ENCODE measurements at regions of chrX and their contacts with region 1.

Region 1: GRCh38 chrX:48957827-48958634 is 624 bp upstream of the OTUD5 start:
- DNase-seq: peak; percentile 84 to 97 (median 95)
- ATAC-seq: peak; percentile 86
- H3K4me3 ChIP-seq: peak overlapping the region; percentile 89
- H3K4me3 Mint-ChIP-seq: peak overlapping the region; percentile 81 to 100 (median 98)
- H3K27ac ChIP-seq: peak overlapping the region; percentile 100
- H3K27ac Mint-ChIP-seq: peak overlapping the region; percentile 98 to 100 (median 100)
- H3K4me1 ChIP-seq: peaks cover 26 to 36% of the 10 kb centered on the region in 2 donors
- H3K4me1 Mint-ChIP-seq: peaks cover 9 to 55% (median 38%) of the 10 kb centered on the region in 7 donors
- H3K27me3 ChIP-seq: no peaks in the 10 kb centered on the region
- H3K27me3 Mint-ChIP-seq: peaks cover 0 to 2% (median 0%) of the 10 kb centered on the region in 5 donors

Region 2: GRCh38 chrX:48179691-48180090 is 778.3 kb before region 1 on chrX:
- CTCF ChIA-PET with region 1: no interaction called
- POLR2A ChIA-PET with region 1: no interaction called
- intact Hi-C with region 1: no loop called
- DNase-seq: no peak
- ATAC-seq: no peak
- H3K4me3 ChIP-seq: no peak overlapping the region
- H3K4me3 Mint-ChIP-seq: no peak overlapping the region
- H3K27ac ChIP-seq: no peak overlapping the region
- H3K27ac Mint-ChIP-seq: no peak overlapping the region
- H3K4me1 ChIP-seq: no peaks in the 10 kb centered on the region
- H3K4me1 Mint-ChIP-seq: no peaks in the 10 kb centered on the region
- H3K27me3 ChIP-seq: no peaks in the 10 kb centered on the region
- H3K27me3 Mint-ChIP-seq: peaks cover 0 to 2% (median 0%) of the 10 kb centered on the region in 5 donors

Region 3: DNA sequence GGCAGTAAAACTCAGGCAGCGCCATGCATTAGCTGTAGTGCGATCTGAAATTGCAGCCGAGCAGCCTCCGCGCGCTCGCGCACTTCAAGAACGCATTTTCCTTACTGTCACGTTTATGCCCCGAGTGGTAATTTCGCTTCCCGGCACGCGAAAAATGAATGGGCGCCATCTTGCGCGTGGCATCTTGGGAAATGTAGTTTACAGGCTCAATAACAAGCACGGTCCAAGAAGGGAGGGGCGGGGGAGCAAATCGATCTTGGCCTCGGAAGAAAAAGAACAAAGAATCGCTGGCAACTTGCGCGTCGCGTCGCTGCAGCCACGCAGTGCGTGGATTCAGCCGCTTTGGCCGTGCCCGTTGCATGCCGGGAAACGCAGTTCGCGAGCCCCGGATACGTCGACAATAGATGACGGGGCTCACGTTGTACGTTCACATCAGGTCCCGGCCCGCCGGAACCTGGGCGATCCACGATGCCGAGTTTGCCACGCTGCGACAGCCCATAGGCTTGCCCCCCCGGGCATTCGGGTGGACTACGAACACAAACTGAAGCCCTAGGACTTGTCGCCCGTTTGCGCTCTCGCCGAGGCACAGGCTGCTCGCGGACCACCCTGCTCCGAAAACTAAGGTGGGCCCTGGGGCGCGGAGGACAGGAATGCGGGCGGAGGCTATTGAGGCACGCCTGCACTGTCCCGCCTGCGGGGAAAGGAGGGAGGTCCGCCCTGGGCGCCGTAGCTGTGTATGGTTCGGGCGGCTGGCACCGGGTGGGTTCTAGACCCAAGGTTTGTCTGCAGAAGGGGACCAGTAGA is 482.1 kb before region 1 on chrX and contains the start of gene FTSJ1:
- CTCF ChIA-PET with region 1: no interaction called
- POLR2A ChIA-PET with region 1: no interaction called
- intact Hi-C with region 1: loop called in 1 of 2 experiments (anchors 5 kb)
- DNase-seq: peak; percentile 59 to 95 (median 91)
- ATAC-seq: peak; percentile 93
- H3K4me3 ChIP-seq: peak within 1 kb of the TSS; percentile 83
- H3K4me3 Mint-ChIP-seq: peak within 1 kb of the TSS; percentile 74 to 93 (median 88)
- H3K27ac ChIP-seq: peak within 1 kb of the TSS; percentile 93
- H3K27ac Mint-ChIP-seq: peak within 1 kb of the TSS; percentile 84 to 96 (median 93)
- H3K4me1 ChIP-seq: peaks cover 8 to 10% of the 10 kb centered on the region in 2 donors
- H3K4me1 Mint-ChIP-seq: peaks cover 19 to 35% (median 26%) of the 10 kb centered on the region in 7 donors
- H3K27me3 ChIP-seq: no peaks in the 10 kb centered on the region
- H3K27me3 Mint-ChIP-seq: no peaks in the 10 kb centered on the region
- total RNA-seq, gene FTSJ1: 48.6 to 62.5 (median 59.5) TPM

Region 4: DNA sequence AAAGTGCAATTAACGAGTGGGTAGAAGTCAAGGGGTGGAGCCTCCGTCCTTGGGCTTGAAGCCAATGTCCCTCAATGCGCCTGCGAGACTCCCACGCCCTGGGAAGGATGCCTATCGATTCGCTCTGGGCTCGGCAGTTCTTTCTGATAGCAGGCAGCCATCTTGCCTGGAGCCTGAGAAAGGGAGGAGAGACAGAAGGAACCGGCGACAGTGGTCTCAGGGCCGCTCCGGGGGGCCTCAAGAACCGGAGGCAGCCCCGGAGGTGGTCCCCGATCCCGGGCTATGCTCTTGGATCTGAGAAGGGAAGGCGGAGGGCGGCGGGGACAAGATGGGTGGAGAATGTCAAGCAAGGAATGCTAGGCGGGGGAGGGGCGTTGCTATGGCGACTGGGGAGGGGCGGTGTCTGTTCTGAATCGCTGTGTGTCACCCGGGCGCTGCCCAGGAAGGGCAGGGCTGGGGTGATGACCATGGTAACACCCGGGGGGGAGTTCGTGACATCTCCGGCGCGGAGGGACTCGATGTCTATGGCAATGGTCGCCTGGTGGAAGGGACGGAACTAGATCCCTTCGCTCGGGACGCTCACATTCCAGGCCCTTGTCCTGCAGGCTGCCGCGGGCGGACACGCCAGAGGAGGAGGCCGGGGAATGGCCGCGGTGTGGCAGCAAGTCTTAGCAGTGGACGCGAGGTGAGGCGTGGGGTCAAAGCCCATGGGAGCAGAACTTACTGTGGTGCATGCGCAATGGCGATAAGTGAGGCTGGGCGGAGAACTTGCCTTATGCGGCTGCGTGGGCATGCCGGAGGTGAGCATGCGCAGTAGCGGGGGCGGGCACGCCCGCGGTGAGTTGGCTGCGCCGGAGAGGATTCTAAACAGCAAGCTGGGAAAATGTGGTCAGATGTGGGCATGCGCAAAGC is 360.4 kb before region 1 on chrX and contains the start of gene WDR13:
- CTCF ChIA-PET with region 1: no interaction called
- POLR2A ChIA-PET with region 1: interaction called, 3 read pairs
- intact Hi-C with region 1: loop called in 1 of 2 experiments (anchors 1 kb)
- DNase-seq: peak; percentile 77 to 93 (median 91)
- ATAC-seq: peak; percentile 93
- H3K4me3 ChIP-seq: peak within 1 kb of the TSS; percentile 98
- H3K4me3 Mint-ChIP-seq: peak within 1 kb of the TSS; percentile 81 to 99 (median 96)
- H3K27ac ChIP-seq: peak within 1 kb of the TSS; percentile 94
- H3K27ac Mint-ChIP-seq: peak within 1 kb of the TSS; percentile 98 to 100 (median 99)
- H3K4me1 ChIP-seq: peaks cover 0 to 8% of the 10 kb centered on the region in 2 donors
- H3K4me1 Mint-ChIP-seq: peaks cover 4 to 16% (median 11%) of the 10 kb centered on the region in 7 donors
- H3K27me3 ChIP-seq: no peaks in the 10 kb centered on the region
- H3K27me3 Mint-ChIP-seq: peaks cover 0 to 2% (median 0%) of the 10 kb centered on the region in 5 donors
- total RNA-seq, gene WDR13: 44.8 to 66.9 (median 54.4) TPM

Region 5: GRCh38 chrX:48801280-48802088 is 156.5 kb before region 1 on chrX and contains the start of gene HDAC6:
- CTCF ChIA-PET with region 1: no interaction called
- POLR2A ChIA-PET with region 1: interaction called, 12 read pairs
- intact Hi-C with region 1: loop called (anchors 1 kb)
- DNase-seq: peak; percentile 76 to 98 (median 95)
- ATAC-seq: peak; percentile 91
- H3K4me3 ChIP-seq: peak within 1 kb of the TSS; percentile 84
- H3K4me3 Mint-ChIP-seq: peak within 1 kb of the TSS; percentile 91 to 98 (median 96)
- H3K27ac ChIP-seq: peak within 1 kb of the TSS; percentile 97
- H3K27ac Mint-ChIP-seq: peak within 1 kb of the TSS; percentile 96 to 99 (median 98)
- H3K4me1 ChIP-seq: peaks cover 6 to 12% of the 10 kb centered on the region in 2 donors
- H3K4me1 Mint-ChIP-seq: peaks cover 10 to 27% (median 16%) of the 10 kb centered on the region in 7 donors
- H3K27me3 ChIP-seq: no peaks in the 10 kb centered on the region
- H3K27me3 Mint-ChIP-seq: no peaks in the 10 kb centered on the region
- total RNA-seq, gene HDAC6: 84.3 to 135 (median 96.1) TPM

Region 6: DNA sequence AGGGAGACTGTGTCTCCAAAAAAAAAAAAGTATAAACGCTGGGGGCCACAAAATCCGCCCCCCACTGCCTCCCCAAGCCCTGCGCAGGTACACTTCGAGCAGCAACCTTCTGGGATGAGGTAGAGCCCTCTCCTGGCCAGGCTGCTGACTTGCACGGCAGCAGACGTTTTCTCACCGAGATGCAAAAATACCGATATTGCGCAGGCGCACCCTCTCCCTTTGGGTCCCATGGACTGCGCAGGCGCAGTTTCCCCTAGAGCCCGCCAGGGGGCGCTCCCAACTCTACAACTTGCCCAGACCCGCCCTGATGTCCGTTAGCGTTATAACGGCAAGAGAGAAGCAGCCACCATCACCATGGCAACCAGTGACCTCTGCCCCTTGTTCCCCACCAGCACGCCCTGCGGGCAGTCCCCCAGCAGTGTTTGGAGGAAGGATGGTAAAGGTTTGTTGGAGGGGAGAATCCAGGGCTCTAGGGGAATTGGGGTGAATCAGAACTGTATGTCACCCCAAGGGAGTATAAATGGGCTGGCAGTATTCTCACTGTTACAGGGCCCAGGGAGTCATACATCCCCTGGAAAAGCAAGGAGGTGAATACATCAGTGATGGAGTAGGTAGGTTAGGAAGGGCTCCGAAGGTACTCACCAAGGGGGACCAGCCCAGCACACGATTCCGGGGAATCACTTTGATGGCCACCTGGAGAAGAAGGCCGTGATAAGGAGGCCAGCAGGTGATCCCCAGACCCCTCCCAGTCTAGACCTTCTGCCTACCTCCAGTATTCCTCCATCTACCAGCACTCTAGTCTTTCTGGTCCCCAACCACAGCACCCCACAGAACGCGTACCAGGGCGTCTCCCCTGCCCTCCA is 40.7 kb before region 1 on chrX:
- CTCF ChIA-PET with region 1: no interaction called
- POLR2A ChIA-PET with region 1: interaction called, 8 read pairs
- intact Hi-C with region 1: loop called (anchors 1 kb)
- DNase-seq: peak; percentile 73 to 92 (median 88)
- ATAC-seq: peak; percentile 65
- H3K4me3 ChIP-seq: peak overlapping the region; percentile 75
- H3K4me3 Mint-ChIP-seq: peak overlapping the region; percentile 87 to 99 (median 96)
- H3K27ac ChIP-seq: peak overlapping the region; percentile 95
- H3K27ac Mint-ChIP-seq: peak overlapping the region; percentile 89 to 99 (median 96)
- H3K4me1 ChIP-seq: peaks cover 46 to 49% of the 10 kb centered on the region in 2 donors
- H3K4me1 Mint-ChIP-seq: peaks cover 11 to 82% (median 48%) of the 10 kb centered on the region in 7 donors
- H3K27me3 ChIP-seq: no peaks in the 10 kb centered on the region
- H3K27me3 Mint-ChIP-seq: peaks cover 0 to 5% (median 0%) of the 10 kb centered on the region in 5 donors

Region 7: GRCh38 chrX:49002091-49002935 is 44.3 kb after region 1 on chrX and contains the start of gene GRIPAP1:
- CTCF ChIA-PET with region 1: no interaction called
- POLR2A ChIA-PET with region 1: interaction called, 23 read pairs
- intact Hi-C with region 1: loop called (anchors 1 kb)
- DNase-seq: peak; percentile 61 to 87 (median 79)
- ATAC-seq: peak; percentile 88
- H3K4me3 ChIP-seq: peak within 1 kb of the TSS; percentile 97
- H3K4me3 Mint-ChIP-seq: peak within 1 kb of the TSS; percentile 94 to 99 (median 98)
- H3K27ac ChIP-seq: peak within 1 kb of the TSS; percentile 97
- H3K27ac Mint-ChIP-seq: peak within 1 kb of the TSS; percentile 92 to 100 (median 98)
- H3K4me1 ChIP-seq: peaks cover 9 to 10% of the 10 kb centered on the region in 2 donors
- H3K4me1 Mint-ChIP-seq: peaks cover 7 to 43% (median 32%) of the 10 kb centered on the region in 7 donors
- H3K27me3 ChIP-seq: no peaks in the 10 kb centered on the region
- H3K27me3 Mint-ChIP-seq: no peaks in the 10 kb centered on the region
- total RNA-seq, gene GRIPAP1: 103 to 108 (median 105) TPM

Region 8: GRCh38 chrX:49163555-49164419 is 205.8 kb after region 1 on chrX:
- CTCF ChIA-PET with region 1: no interaction called
- POLR2A ChIA-PET with region 1: interaction called, 3 read pairs
- intact Hi-C with region 1: loop called in 1 of 2 experiments (anchors 1 kb)
- DNase-seq: peak; percentile 71 to 84 (median 80)
- ATAC-seq: peak; percentile 74
- H3K4me3 ChIP-seq: peak overlapping the region; percentile 50
- H3K4me3 Mint-ChIP-seq: peak overlapping the region; percentile 72 to 84 (median 81)
- H3K27ac ChIP-seq: peak overlapping the region; percentile 74
- H3K27ac Mint-ChIP-seq: peak overlapping the region; percentile 79 to 97 (median 92)
- H3K4me1 ChIP-seq: peaks cover 14 to 16% of the 10 kb centered on the region in 2 donors
- H3K4me1 Mint-ChIP-seq: peaks cover 13 to 33% (median 26%) of the 10 kb centered on the region in 7 donors
- H3K27me3 ChIP-seq: no peaks in the 10 kb centered on the region
- H3K27me3 Mint-ChIP-seq: peaks cover 0 to under 1% (median 0%) of the 10 kb centered on the region in 5 donors

Measured in naive thymus-derived CD4-positive, alpha-beta T cell (primary cell).